ENCODE measurements at regions of chr2 and their contacts with region 1.

Region 1: GRCh38 chr2:73212448-73213176 is 1.4 kb upstream of the SMYD5 start:
- DNase-seq: peak; percentile 85
- H3K4me3 Mint-ChIP-seq: no peak overlapping the region
- H3K27ac Mint-ChIP-seq: no peak overlapping the region
- H3K4me1 Mint-ChIP-seq: peaks cover 29% of the 10 kb centered on the region
- H3K27me3 Mint-ChIP-seq: peaks cover 3% of the 10 kb centered on the region

Region 2: DNA sequence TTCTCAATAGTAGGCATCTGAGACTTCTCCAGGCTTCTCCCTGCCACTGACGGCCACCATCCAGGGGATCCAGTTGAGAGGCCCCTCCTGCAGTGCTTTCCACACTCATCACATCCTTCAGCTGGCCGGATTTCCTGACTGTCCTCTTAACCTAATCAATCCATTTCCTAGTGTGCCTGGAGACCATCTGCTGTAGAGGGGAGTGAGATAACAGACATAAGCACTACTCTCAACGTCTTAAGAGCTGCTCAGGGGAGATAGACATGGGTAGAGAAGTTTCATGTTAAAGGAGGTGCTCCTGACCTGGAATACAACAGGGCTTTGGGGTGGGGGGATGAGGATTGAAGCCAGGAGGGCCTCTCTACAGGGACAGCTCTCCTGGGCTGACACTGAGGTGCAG is 311.2 kb before region 1 on chr2:
- CTCF ChIA-PET with region 1: no interaction called
- intact Hi-C with region 1: no loop called
- DNase-seq: no peak
- H3K4me3 Mint-ChIP-seq: no peak overlapping the region
- H3K27ac Mint-ChIP-seq: no peak overlapping the region
- H3K4me1 Mint-ChIP-seq: no peaks in the 10 kb centered on the region
- H3K27me3 Mint-ChIP-seq: peaks cover 28% of the 10 kb centered on the region

Region 3: DNA sequence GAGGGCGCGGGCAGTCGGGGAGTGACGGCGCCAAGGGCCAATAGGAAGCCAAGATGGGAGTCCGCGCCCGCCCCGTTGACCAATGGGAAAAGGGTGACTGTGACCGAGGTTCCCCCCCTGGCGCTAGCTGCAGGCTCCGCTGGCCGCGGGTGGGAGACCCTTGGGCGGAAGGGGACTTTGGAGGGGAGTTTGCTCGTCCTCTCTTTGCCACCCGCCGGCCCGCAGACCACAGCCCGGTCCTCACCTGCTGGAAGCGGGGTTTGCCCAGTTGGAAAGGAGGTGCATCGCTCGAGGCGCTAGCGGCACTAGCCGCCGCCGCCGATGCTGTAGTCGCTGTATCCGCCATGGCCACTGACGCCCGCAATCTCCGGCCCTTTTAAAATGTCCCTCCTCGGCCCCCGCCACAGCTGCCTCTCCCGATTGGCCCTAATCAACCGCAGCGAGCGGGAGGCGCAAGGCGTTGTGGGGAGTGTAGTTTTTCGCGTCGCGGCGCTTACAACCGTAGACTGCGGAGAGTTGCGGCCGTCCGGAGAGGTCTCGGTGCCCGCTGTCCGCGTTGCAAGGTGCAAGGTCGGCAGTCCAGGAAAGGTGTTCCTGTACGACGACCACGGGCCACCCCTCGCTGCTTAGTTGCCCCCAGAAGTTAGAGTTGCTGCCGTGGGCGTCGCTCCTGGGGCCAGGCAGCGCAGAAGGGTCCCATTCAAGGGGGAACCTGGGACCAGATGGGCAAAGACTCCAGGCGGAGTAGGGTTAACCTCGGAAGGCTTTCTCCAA is 141.1 kb before region 1 on chr2 and contains the start of gene SFXN5:
- CTCF ChIA-PET with region 1: no interaction called
- intact Hi-C with region 1: loop called (anchors 1 kb)
- DNase-seq: peak; percentile 96
- H3K4me3 Mint-ChIP-seq: peak within 1 kb of the TSS; percentile 88
- H3K27ac Mint-ChIP-seq: peak within 1 kb of the TSS; percentile 87
- H3K4me1 Mint-ChIP-seq: peaks cover 20% of the 10 kb centered on the region
- H3K27me3 Mint-ChIP-seq: no peaks in the 10 kb centered on the region
- total RNA-seq, gene SFXN5: 5.3 to 6.8 TPM

Region 4: DNA sequence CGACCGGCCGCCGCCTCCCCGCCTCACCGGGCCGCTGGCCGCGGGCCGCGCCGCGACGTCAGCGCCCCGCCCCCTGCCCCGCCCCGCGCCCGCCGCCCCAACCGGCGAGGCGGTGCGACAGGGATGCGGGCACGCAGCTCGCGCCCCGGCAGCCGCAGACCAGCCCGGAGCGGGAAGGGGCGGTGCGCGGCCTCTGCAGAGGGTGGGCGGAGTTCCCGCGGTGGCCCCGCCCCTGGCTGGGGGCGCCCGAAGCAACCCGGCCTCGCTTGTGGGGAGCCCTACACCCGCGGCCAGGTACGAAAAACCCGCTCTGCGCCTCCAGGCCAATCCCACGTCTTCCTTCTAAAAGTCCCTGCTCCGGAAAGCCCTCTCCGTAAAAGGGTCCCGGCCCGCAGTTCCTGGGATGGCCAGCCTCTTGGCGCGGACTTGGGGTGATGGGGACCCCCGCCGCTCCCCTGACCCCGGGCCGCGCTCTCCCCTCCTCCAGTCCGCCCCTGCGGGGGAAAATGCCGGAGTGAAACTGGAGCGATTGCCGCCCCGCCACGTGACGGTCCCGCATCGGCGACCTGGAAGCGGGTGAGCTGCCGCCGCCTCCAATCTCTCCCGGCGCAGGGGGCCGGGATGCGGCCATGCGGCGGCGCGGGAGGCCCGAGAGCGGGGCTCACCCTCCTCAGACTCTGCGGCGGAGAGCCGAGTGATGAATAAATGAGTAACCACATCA is 99.5 kb before region 1 on chr2 and contains the start of gene RAB11FIP5:
- CTCF ChIA-PET with region 1: interaction called, 3 read pairs
- intact Hi-C with region 1: loop called (anchors 1 kb)
- DNase-seq: peak; percentile 78
- H3K4me3 Mint-ChIP-seq: peak within 1 kb of the TSS; percentile 81
- H3K27ac Mint-ChIP-seq: no peak within 1 kb of the TSS
- H3K4me1 Mint-ChIP-seq: peaks cover 21% of the 10 kb centered on the region
- H3K27me3 Mint-ChIP-seq: no peaks in the 10 kb centered on the region
- total RNA-seq, gene RAB11FIP5: 7.3 to 7.4 TPM

Region 5: GRCh38 chr2:73197579-73197978 is 15.0 kb before region 1 on chr2:
- CTCF ChIA-PET with region 1: interaction called, 11 read pairs
- intact Hi-C with region 1: no loop called
- DNase-seq: no peak
- H3K4me3 Mint-ChIP-seq: no peak overlapping the region
- H3K27ac Mint-ChIP-seq: no peak overlapping the region
- H3K4me1 Mint-ChIP-seq: peaks cover 3% of the 10 kb centered on the region
- H3K27me3 Mint-ChIP-seq: peaks cover 26% of the 10 kb centered on the region

Region 6: GRCh38 chr2:73293534-73294171 is 81.0 kb after region 1 on chr2 and contains the start of gene EGR4:
- CTCF ChIA-PET with region 1: interaction called, 8 read pairs
- intact Hi-C with region 1: loop called (anchors 1 kb)
- DNase-seq: peak; percentile 94
- H3K4me3 Mint-ChIP-seq: peak within 1 kb of the TSS; percentile 73
- H3K27ac Mint-ChIP-seq: no peak within 1 kb of the TSS
- H3K4me1 Mint-ChIP-seq: peaks cover 14% of the 10 kb centered on the region
- H3K27me3 Mint-ChIP-seq: peaks cover 65% of the 10 kb centered on the region
- total RNA-seq, gene EGR4: 0.07 to 0.12 TPM